ENCODE measurements at regions of chr1 and their contacts with region 1.

Region 1: GRCh38 chr1:114346480-114347029 is 164.4 kb downstream of the TRIM33 start:
- H3K4me3 Mint-ChIP-seq: peak overlapping the region; percentile 87
- H3K27ac Mint-ChIP-seq: peak overlapping the region; percentile 76
- H3K4me1 Mint-ChIP-seq: peaks cover 19% of the 10 kb centered on the region
- H3K27me3 Mint-ChIP-seq: peaks cover 12% of the 10 kb centered on the region

Region 2: DNA sequence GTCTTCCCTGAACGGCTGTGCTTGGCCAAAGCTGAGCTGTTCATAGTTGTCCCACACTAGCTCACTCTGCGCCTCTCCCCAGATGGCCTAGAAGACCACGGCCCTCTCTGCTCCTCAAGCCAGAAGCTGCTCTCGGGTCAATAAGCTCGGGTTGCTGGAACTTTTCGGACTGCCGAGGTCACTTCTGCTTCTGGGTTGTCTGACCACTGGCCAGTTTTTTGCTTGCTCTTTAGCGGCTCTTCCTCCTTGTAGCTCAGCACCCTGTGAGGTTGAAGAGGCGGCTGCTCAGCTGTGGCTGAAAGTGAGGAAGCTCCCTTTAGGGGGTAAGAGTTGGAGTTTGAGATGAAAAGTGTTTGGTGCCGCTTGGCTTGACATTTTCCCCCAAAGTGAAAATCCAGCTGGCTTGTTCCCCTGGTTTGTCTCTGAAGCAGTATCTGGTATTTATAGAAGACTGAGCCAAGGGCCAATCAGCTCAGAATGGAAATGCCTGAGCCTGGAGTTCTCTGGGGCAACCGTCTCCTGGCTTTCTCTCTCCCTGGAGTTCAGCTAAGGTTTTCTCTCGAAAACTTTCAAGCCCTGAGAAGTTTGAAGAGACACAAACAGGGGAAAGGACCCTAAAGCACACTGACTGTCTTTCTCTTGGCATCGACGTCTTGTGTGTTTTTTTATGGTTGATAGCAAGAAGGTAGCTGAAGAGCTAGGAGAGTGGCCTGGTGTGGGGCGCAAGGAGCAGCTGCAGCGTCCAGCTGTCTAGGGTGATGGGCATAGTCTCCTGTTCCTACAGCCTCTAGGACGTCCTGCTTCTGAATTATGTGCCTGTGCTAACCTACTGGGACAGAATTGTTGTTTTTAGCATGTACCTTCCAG is 264.9 kb before region 1 on chr1:
- intact Hi-C with region 1: no loop called
- H3K4me3 Mint-ChIP-seq: no peak overlapping the region
- H3K27ac Mint-ChIP-seq: peak overlapping the region; percentile 68
- H3K4me1 Mint-ChIP-seq: peaks cover 50% of the 10 kb centered on the region
- H3K27me3 Mint-ChIP-seq: no peaks in the 10 kb centered on the region

Region 3: DNA sequence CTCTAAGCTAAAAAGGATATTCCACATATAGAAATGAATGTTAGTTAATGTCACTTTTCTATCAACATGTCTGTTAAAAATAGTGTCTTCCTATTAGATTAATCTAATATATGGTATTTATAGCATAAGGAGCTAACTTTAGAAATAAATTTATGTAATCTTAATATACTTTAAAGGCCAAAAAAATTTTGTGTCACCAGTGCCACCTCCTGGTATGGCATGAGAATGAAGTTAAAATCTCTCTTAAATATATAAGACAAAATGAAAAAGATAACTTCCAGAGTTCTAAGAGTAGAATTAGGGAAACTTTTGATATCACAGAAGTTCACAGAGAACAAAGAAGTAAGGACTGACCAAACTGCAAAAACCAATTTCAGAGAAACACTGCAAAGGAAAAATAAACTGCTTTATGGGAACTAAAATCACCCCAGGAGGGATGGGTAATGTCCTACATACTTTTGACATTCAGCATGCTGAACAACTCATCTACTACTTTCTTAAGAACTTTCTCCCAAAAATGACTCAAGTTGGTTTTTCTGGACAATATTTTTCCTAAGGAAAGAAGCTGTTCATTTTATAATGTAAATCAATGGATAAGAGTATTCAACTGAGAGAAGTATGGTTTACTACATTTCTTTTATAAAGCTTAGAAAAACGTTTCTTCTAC is 81.7 kb after region 1 on chr1:
- intact Hi-C with region 1: loop called (anchors 1 kb)
- H3K4me3 Mint-ChIP-seq: no peak overlapping the region
- H3K27ac Mint-ChIP-seq: no peak overlapping the region
- H3K4me1 Mint-ChIP-seq: no peaks in the 10 kb centered on the region
- H3K27me3 Mint-ChIP-seq: no peaks in the 10 kb centered on the region

Region 4: GRCh38 chr1:114511032-114511785 is 164.7 kb after region 1 on chr1 and contains the start of gene TRIM33:
- intact Hi-C with region 1: loop called (anchors 2 kb)
- H3K4me3 Mint-ChIP-seq: peak within 1 kb of the TSS; percentile 89
- H3K27ac Mint-ChIP-seq: peak within 1 kb of the TSS; percentile 100
- H3K4me1 Mint-ChIP-seq: peaks cover 46% of the 10 kb centered on the region
- H3K27me3 Mint-ChIP-seq: peaks cover 2% of the 10 kb centered on the region

Region 5: GRCh38 chr1:114575532-114575931 is 229.0 kb after region 1 on chr1:
- intact Hi-C with region 1: loop called (anchors 10 kb)
- H3K4me3 Mint-ChIP-seq: no peak overlapping the region
- H3K27ac Mint-ChIP-seq: no peak overlapping the region
- H3K4me1 Mint-ChIP-seq: no peaks in the 10 kb centered on the region
- H3K27me3 Mint-ChIP-seq: no peaks in the 10 kb centered on the region

Region 6: GRCh38 chr1:114670083-114671010 is 323.8 kb after region 1 on chr1:
- intact Hi-C with region 1: loop called (anchors 2 kb)
- H3K4me3 Mint-ChIP-seq: peak overlapping the region; percentile 81
- H3K27ac Mint-ChIP-seq: peak overlapping the region; percentile 45
- H3K4me1 Mint-ChIP-seq: no peaks in the 10 kb centered on the region
- H3K27me3 Mint-ChIP-seq: peaks cover 36% of the 10 kb centered on the region

Region 7: GRCh38 chr1:114716304-114717170 is 370.0 kb after region 1 on chr1 and contains the start of gene NRAS:
- intact Hi-C with region 1: loop called (anchors 5 kb)
- H3K4me3 Mint-ChIP-seq: peak within 1 kb of the TSS; percentile 98
- H3K27ac Mint-ChIP-seq: peak within 1 kb of the TSS; percentile 100
- H3K4me1 Mint-ChIP-seq: no peaks in the 10 kb centered on the region
- H3K27me3 Mint-ChIP-seq: no peaks in the 10 kb centered on the region